ENCODE measurements at regions of chr7 and their contacts with region 1.

Region 1: GRCh38 chr7:143287935-143288826 is at the start of gene CASP2:
- DNase-seq: peak; percentile 99
- H3K4me3 Mint-ChIP-seq: peak within 1 kb of the TSS; percentile 90
- H3K27ac Mint-ChIP-seq: peak within 1 kb of the TSS; percentile 90
- H3K4me1 Mint-ChIP-seq: peaks cover 67% of the 10 kb centered on the region
- H3K27me3 Mint-ChIP-seq: no peaks in the 10 kb centered on the region
- total RNA-seq, gene CASP2: 102 to 125 TPM

Region 2: GRCh38 chr7:143256932-143257331 is 31.2 kb before region 1 on chr7:
- CTCF ChIA-PET with region 1: interaction called, 4 read pairs
- POLR2A ChIA-PET with region 1: interaction called, 13 read pairs
- DNase-seq: no peak
- H3K4me3 Mint-ChIP-seq: no peak overlapping the region
- H3K27ac Mint-ChIP-seq: no peak overlapping the region
- H3K4me1 Mint-ChIP-seq: peaks cover 73% of the 10 kb centered on the region
- H3K27me3 Mint-ChIP-seq: no peaks in the 10 kb centered on the region

Region 3: GRCh38 chr7:143299840-143300239 is 11.7 kb after region 1 on chr7:
- CTCF ChIA-PET with region 1: interaction called, 18 read pairs
- POLR2A ChIA-PET with region 1: interaction called, 3 read pairs
- DNase-seq: peak; percentile 74
- H3K4me3 Mint-ChIP-seq: no peak overlapping the region
- H3K27ac Mint-ChIP-seq: peak overlapping the region; percentile 43
- H3K4me1 Mint-ChIP-seq: peaks cover 67% of the 10 kb centered on the region
- H3K27me3 Mint-ChIP-seq: no peaks in the 10 kb centered on the region

Region 4: GRCh38 chr7:143305423-143306070 is 17.4 kb after region 1 on chr7:
- CTCF ChIA-PET with region 1: interaction called, 18 read pairs
- POLR2A ChIA-PET with region 1: interaction called, 6 read pairs
- DNase-seq: peak; percentile 71
- H3K4me3 Mint-ChIP-seq: no peak overlapping the region
- H3K27ac Mint-ChIP-seq: peak overlapping the region; percentile 21
- H3K4me1 Mint-ChIP-seq: peaks cover 70% of the 10 kb centered on the region
- H3K27me3 Mint-ChIP-seq: no peaks in the 10 kb centered on the region

Region 5: DNA sequence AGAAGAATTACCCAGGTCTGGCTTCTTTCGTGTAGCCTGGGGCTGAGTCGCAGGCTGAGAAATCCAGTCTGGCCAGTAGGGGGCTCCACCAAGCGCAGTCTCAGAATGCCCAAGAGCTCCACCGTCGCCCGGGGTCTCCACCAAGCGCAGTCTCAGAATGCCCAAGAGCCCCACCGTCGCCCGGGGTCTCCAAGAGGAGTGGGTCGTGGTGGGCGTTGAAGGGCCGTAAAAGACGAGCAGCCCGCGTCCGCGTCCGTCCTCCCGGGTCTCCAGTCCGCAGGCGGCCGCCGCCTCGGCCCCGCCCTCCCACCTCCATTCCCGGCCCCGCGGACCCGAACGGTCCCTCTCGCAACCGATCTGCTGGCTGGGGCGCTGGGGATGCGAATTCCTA is 92.1 kb after region 1 on chr7:
- CTCF ChIA-PET with region 1: no interaction called
- POLR2A ChIA-PET with region 1: no interaction called
- DNase-seq: peak; percentile 88
- H3K4me3 Mint-ChIP-seq: peak overlapping the region; percentile 84
- H3K27ac Mint-ChIP-seq: peak overlapping the region; percentile 93
- H3K4me1 Mint-ChIP-seq: peaks cover 43% of the 10 kb centered on the region
- H3K27me3 Mint-ChIP-seq: no peaks in the 10 kb centered on the region